ENCODE measurements at regions of chr10 and their contacts with region 1.

Region 1: DNA sequence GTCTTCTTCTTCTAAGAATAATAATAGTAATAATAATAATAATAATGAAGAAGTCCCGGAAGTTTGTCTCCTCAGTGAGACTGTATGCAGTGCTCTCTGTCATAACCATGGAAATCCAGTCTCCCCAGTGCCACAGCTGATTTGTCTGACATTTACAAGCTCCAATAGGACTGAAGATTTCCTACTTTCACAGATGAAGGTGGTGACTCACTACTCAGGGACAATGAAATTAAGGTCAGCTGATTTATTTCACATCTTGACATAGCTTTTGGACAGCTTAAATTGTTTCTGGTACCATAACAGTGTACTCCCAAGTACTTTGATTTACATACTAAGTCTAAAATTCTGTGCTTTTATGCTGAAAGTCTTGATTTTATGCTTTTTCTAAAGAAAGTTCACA is 6.9 kb downstream of the CELF2 start:
- DNase-seq: no peak
- ATAC-seq: no peak
- H3K4me3 ChIP-seq: no peak overlapping the region
- H3K27ac ChIP-seq: no peak overlapping the region
- H3K4me1 ChIP-seq: peaks cover 3 to 4% of the 10 kb centered on the region in 2 donors
- H3K27me3 ChIP-seq: no peaks in the 10 kb centered on the region

Region 2: GRCh38 chr10:10605551-10606081 is 419.0 kb before region 1 on chr10:
- intact Hi-C with region 1: loop called in 1 of 2 experiments (anchors 10 kb)
- DNase-seq: no peak
- ATAC-seq: peak; percentile 91
- H3K4me3 ChIP-seq: no peak overlapping the region
- H3K27ac ChIP-seq: peak overlapping the region; percentile 67 to 79
- H3K4me1 ChIP-seq: peaks cover 0 to 3% of the 10 kb centered on the region in 2 donors
- H3K27me3 ChIP-seq: no peaks in the 10 kb centered on the region

Region 3: DNA sequence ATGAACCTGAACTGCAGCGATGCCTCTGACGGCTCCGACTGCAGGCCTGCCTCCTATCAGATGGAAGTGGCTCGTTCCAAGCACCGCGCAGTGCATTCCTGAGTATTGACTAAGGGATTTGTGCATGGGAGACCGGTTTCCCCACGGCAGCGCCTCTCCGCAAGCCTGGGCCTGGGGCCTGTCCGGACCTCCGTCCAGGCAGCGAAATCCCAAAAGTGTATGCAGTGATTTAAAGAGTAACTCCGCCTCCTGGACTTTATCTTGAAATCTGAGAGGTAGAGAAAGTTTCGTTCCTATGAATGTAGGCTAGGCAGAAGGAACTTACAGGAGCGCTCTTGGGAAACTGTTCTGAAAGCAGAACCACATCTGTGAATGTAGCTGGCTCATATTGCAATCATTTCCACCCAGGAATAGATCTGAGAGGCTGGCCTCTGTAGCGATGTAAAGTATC is 113.1 kb before region 1 on chr10:
- intact Hi-C with region 1: loop called in 1 of 2 experiments (anchors 5 kb)
- DNase-seq: peak; percentile 88 to 93
- ATAC-seq: peak; percentile 88
- H3K4me3 ChIP-seq: no peak overlapping the region
- H3K27ac ChIP-seq: peak overlapping the region; percentile 28 to 79
- H3K4me1 ChIP-seq: peaks cover 0 to 2% of the 10 kb centered on the region in 2 donors
- H3K27me3 ChIP-seq: no peaks in the 10 kb centered on the region